Endothelial cell of umbilical vein (primary cell): ENCODE measurements at regions of chr11 and their contacts with region 1.

Region 1: DNA sequence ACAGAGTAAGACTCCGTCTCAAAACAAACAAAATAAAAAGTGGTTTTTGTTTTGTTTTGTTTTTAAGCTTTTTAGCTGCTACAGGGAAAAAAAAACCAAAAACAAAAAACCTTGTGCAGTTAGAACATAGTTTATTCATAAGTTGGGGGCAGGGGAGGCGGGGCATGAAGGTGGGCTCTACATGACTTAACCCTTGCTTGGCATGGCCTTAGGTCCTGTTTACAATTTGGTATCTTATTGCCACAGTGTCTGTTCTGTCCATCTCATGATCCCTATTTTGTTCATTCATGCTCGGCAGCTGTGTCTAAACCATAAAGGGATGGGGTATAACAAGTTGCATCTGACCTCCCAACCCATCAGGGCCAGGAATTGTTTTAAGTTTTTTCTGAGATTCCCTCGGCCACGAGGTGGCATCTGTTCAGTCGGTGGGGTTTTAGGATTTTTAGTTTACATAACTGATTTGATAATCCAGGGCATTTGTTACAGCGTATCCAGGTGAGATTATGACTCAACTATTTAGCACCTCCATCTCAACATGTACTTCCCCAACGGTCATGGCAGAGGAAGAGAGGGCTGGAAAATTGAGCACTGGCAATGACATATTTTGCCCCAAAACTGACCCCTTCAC is 6.9 kb downstream of the AP5B1 start:
- DNase-seq: no peak
- H3K4me3 ChIP-seq: no peak overlapping the region
- H3K27ac ChIP-seq: no peak overlapping the region
- H3K4me1 ChIP-seq: no peaks in the 10 kb centered on the region
- H3K27me3 ChIP-seq: no peaks in the 10 kb centered on the region
- CTCF ChIP-seq: no peak
- POLR2A ChIP-seq: no peak

Region 2: GRCh38 chr11:65625628-65626342 is 148.1 kb before region 1 on chr11:
- CTCF ChIA-PET with region 1: interaction called, 14 read pairs
- POLR2A ChIA-PET with region 1: no interaction called
- dilution Hi-C with region 1: no loop called
- intact Hi-C with region 1: loop called (anchors 2 kb)
- DNase-seq: peak; percentile 56
- H3K4me3 ChIP-seq: no peak overlapping the region
- H3K27ac ChIP-seq: no peak overlapping the region
- H3K4me1 ChIP-seq: no peaks in the 10 kb centered on the region
- H3K27me3 ChIP-seq: no peaks in the 10 kb centered on the region
- CTCF ChIP-seq: peak; percentile 81 to 91
- POLR2A ChIP-seq: no peak

Region 3: GRCh38 chr11:65711785-65712632 is 61.9 kb before region 1 on chr11 and contains the start of gene KAT5:
- CTCF ChIA-PET with region 1: interaction called, 24 read pairs
- POLR2A ChIA-PET with region 1: no interaction called
- dilution Hi-C with region 1: no loop called
- intact Hi-C with region 1: loop called (anchors 1 kb)
- DNase-seq: peak; percentile 98
- H3K4me3 ChIP-seq: peak within 1 kb of the TSS; percentile 19 to 66 (median 49)
- H3K27ac ChIP-seq: peak within 1 kb of the TSS; percentile 89
- H3K4me1 ChIP-seq: peaks cover 6% of the 10 kb centered on the region
- H3K27me3 ChIP-seq: no peaks in the 10 kb centered on the region
- CTCF ChIP-seq: peak; percentile 93 to 97
- POLR2A ChIP-seq: no peak
- total RNA-seq, gene KAT5: 48.8 and 50.2 TPM in 2 replicates

Region 4: DNA sequence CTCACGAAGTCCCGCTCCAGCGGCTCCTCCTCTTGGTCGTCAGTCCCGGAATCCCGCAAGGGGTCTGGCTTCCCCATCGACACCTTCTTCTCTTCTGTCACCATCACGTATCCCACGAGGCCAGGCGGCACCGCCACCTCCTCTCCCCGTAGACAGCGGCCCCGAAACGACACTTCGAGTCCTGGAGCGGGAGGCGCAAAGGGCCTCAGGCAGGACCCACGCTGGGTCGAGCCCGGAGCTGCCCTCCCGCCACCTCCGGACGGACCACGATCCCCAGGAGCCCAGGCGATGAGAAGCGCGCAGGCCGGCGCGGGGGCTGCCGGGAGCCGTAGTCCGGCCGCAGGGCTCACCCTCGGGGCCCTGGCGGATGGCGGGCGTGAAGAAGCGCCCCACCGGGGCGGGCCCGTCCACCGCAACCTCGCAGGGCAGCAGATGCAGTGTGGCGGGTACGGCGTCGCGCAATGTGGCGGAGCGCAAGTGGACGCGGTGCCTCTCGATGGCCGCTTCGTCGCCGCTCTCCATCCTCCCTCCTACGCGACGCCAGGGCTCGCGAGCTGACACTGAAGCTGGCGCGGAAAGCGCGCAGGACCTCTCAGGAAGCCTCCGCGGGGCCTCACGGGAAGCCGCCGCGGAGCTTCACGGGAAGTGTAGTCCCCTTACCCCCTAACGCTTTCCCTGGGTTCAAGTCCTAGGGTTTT is 53.5 kb before region 1 on chr11 and contains the start of gene RNASEH2C:
- CTCF ChIA-PET with region 1: interaction called, 25 read pairs
- POLR2A ChIA-PET with region 1: no interaction called
- dilution Hi-C with region 1: no loop called
- intact Hi-C with region 1: no loop called
- DNase-seq: peak; percentile 85
- H3K4me3 ChIP-seq: peak within 1 kb of the TSS; percentile 64 to 82 (median 67)
- H3K27ac ChIP-seq: peak within 1 kb of the TSS; percentile 36
- H3K4me1 ChIP-seq: peaks cover 13% of the 10 kb centered on the region
- H3K27me3 ChIP-seq: no peaks in the 10 kb centered on the region
- CTCF ChIP-seq: no peak
- POLR2A ChIP-seq: peak; percentile 76
- total RNA-seq, gene RNASEH2C: 46.4 and 62.0 TPM in 2 replicates

Region 5: DNA sequence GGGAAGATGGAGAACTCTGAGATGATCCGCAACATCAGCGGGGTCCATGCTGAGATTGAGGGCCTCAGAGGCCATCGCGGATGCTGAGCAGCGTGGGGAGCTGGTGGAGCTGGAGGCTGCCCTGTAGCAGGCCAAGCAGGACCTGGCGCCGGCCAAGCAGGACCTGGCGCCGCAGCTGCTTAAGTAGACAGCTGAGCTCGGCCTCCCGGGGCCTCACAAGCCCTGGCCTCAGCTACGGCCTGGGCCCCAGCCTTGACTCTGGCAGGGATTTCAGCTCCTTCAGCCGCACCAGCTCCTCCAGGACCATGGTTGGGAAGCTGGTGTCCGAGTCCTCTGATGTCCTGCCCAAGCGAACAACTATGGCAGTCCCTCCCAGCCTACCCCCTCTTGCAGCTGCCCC is 46.0 kb before region 1 on chr11:
- CTCF ChIA-PET with region 1: interaction called, 12 read pairs
- POLR2A ChIA-PET with region 1: no interaction called
- dilution Hi-C with region 1: no loop called
- intact Hi-C with region 1: no loop called
- DNase-seq: no peak
- H3K4me3 ChIP-seq: no peak overlapping the region
- H3K27ac ChIP-seq: no peak overlapping the region
- H3K4me1 ChIP-seq: no peaks in the 10 kb centered on the region
- H3K27me3 ChIP-seq: peaks cover 2 to 9% of the 10 kb centered on the region in 2 experiments
- CTCF ChIP-seq: no peak
- POLR2A ChIP-seq: no peak

Region 6: DNA sequence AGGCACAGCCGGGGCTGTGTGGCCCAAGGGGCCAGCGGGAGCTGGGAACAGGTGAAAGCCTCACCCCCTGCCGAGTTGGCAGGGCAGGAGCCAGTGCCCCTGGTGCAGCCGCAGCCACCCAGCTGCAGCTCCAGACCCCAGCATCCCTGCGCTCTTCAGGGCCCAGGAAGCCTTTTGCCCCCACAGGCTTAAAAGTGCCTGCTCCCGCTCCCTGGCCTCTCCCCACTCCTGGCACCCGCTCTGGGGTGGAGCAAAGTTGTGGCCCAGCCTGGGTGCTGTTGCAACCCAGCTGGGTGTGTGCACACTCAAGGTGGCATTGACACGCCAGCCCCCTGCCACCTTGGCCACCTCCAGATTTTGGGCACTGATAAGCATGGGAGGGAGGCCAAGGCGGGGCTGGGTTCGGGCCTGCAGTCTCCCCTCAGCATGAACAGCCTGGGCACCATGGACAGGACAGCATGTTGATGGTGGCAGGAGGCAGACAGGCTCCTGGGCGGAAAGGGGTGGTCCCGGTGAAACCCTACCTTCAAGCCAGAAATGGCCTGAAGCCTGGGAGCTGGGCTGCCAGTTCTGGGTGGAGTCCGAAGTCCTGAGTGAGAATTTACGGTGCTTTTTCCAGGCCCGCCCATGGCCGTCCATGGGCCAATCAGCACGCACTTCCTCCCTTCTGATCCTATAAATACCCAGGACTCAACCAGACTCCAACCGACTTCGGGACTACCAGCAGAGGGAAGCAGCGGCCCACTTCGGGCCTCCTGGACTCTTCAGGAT is 29.8 kb before region 1 on chr11:
- CTCF ChIA-PET with region 1: interaction called, 12 read pairs
- POLR2A ChIA-PET with region 1: no interaction called
- dilution Hi-C with region 1: no loop called
- intact Hi-C with region 1: no loop called
- DNase-seq: peak; percentile 28
- H3K4me3 ChIP-seq: no peak overlapping the region
- H3K27ac ChIP-seq: no peak overlapping the region
- H3K4me1 ChIP-seq: no peaks in the 10 kb centered on the region
- H3K27me3 ChIP-seq: peaks cover 8 to 18% of the 10 kb centered on the region in 2 experiments
- CTCF ChIP-seq: peak in 1 of 2 donors; percentile 15
- POLR2A ChIP-seq: no peak

Region 7: DNA sequence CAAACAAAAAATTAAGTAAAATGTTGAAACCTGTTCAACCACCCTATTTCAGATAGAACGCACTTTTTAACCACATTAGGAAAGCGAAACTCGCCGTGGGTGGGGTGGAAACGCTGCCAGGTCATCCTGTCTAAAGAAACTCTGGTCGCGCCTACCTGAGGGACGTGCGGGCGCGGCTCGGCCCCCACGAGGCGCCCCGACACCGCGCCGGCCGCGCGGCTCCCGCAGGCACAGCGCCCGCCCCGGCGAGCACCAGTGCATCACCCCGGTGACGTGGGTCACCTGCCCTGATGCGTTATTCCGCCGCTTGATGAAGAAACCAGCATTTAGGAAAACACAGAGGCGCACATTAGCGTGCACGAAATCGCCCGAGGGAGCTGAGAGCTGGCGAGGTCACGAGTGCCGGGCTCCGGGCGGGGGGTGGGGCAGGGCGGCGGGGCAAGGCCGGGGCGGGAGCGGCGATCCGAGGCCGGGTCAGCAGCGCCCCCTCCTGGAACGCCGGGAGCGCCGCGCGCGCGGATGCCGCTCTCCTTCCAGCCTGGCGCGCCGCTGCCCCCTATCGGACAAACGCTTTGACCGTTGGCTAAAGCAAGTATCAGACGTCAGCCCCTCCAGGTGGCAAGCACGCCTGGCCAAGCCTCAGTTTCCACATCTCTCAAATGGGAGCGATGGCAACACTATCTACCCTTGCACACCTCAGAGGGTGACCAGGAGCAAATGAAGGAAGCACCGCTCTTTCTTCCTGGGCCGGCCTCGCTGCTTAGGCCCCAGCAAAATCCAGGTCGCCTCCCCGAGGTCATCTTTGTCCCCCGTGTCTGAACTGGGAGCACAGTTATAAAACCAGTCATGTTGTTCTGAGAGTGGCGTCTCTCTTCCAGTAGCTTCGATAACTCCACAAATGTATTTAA is 44.2 kb after region 1 on chr11:
- CTCF ChIA-PET with region 1: interaction called, 109 read pairs
- POLR2A ChIA-PET with region 1: interaction called, 5 read pairs
- dilution Hi-C with region 1: no loop called
- intact Hi-C with region 1: no loop called
- DNase-seq: peak; percentile 80
- H3K4me3 ChIP-seq: peak overlapping the region; percentile 13 to 74 (median 66)
- H3K27ac ChIP-seq: no peak overlapping the region
- H3K4me1 ChIP-seq: no peaks in the 10 kb centered on the region
- H3K27me3 ChIP-seq: peaks cover 0 to 2% of the 10 kb centered on the region in 2 experiments
- CTCF ChIP-seq: peak; percentile 97 to 99
- POLR2A ChIP-seq: no peak